Cardiac septum (tissue), 1 donor: ENCODE measurements at regions of chr9 and their contacts with region 1.

Region 1: GRCh38 chr9:127916665-127917613 is at the start of gene ST6GALNAC4:
- DNase-seq: peak; percentile 98
- total RNA-seq, gene ST6GALNAC4: 48.1 TPM

Region 2: DNA sequence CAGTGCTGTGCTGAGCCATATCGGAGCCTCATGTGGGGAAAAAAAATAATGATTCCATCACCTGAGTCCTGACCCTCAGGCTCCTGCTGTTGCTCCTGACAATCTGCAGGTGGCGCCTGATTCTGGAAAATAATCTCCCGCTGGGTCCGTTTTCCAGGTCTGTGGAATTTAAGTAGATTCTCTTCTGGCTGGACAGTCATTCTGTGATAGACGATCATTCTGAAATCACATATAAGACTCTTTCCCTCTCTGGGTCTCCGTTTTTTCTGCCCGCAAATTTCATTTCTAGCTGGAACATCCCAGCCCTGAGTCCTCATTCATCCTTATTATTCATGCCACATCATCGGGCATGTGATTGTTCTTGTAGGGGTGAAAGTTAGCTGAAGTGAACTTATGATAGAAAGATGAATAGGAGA is 327.0 kb before region 1 on chr9:
- intact Hi-C with region 1: loop called (anchors 1 kb)
- DNase-seq: no peak

Region 3: DNA sequence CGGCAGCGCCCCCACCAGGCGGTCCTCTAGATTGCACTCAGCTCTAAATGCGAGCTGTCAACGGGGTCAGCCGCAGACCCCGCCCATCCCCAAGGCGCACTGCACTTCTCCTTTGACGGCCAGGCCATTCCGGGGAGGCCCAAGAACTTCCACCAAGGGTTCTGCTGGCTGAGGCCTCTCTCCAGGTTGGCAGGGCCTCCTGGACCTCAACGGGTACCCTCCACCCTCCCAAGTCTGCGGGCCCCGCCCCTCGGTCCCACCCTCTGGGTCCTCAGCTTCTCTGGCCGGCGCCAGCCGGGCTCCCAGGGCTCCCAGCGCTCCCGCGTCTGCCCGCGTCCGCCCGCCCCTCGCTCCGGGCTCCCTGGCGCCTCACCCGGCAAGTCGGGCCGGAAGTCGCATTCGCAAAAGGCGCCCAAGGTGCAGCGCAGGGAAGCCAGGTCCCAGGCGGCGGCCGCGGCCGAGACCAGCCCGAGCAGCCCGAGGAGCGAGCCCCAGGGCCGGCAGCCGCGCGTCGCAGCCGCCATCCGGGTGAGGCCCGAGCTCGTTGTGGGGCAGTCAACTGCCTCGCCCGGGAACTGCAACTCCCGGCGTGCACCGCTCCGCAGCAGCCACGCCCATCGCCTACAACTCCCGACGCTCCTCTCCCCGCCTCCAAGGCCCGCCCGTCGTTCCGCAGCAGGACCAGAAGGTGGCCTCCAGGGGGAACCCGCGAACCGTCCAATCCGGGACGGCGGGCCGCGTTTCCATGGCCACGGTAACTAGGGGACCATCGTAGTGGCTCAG is 182.0 kb before region 1 on chr9 and contains the start of gene TOR2A:
- intact Hi-C with region 1: loop called (anchors 2 kb)
- DNase-seq: peak; percentile 98
- total RNA-seq, gene TOR2A: 4.4 TPM

Region 4: GRCh38 chr9:127802576-127803443 is 114.1 kb before region 1 on chr9 and contains the start of gene FPGS:
- intact Hi-C with region 1: loop called (anchors 5 kb)
- DNase-seq: peak; percentile 93
- total RNA-seq, gene FPGS: 36.5 TPM

Region 5: DNA sequence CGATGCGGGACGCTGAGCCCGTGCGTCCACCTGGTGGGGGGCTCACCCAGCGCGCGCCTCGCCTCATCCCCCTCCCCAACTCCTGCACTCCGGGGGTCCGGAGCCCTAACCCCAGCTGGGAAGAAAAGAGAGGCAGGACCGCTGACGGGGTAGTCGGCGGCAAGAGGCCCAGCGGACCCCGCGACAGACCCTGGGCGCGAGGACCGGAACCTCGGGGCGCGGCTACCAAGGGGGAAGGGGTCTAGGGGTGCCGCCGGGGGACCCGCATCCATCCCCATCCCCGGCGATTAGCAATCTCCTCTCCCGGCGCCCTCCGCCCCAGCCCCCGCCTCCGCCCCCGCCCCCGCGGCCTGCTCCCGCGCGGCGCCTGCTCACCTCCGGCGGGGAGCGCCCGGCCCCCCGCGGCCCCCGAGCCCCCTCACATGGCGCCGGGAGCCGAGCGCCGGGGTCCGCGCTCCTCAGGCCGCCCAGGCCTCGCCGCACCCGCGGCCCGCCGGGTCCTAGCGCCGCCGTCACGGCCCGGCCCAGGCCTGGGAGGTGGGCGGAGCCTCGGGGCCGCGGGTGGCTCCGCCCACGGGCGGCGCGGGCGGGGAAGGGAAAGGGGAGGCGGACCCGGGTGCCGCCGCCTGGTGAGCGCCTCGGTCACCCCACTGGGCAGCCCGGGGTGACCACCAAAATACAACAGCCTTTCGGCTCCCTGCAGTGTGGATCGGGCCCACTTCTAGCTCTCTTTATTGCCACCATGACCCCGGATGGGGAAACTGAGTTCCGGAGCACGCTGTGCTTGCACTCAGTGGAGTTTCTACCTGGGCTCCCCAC is 17.6 kb before region 1 on chr9 and contains the start of gene ST6GALNAC6:
- intact Hi-C with region 1: loop called (anchors 2 kb)
- DNase-seq: peak; percentile 89
- total RNA-seq, gene ST6GALNAC6: 49.4 TPM

Region 6: DNA sequence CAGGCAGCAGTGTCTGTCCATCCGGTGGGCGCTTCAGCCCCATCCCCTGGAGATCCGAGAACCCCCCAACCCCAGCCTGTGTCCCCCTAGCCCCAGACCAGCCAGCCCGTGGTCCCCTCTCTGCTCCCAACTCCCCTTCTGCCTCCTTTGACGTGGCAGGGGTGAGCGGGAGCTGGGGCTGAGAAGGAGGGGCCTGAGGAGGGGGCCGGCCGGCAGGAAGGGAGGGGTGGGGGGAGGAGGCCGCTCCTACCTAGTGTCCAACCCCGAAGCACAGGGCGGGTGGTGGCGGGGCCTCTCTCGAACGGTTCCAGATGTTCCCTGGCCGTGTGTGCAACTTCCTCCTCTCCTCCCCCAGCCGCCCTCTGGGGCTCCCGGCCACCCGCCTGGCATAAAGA is 327.9 kb after region 1 on chr9:
- intact Hi-C with region 1: no loop called
- DNase-seq: peak; percentile 90